Activated B cell treated with CpG ODN at 0.5 μM for 24 hours (primary cell): ENCODE measurements at regions of chr13 and their contacts with region 1.

Region 1: DNA sequence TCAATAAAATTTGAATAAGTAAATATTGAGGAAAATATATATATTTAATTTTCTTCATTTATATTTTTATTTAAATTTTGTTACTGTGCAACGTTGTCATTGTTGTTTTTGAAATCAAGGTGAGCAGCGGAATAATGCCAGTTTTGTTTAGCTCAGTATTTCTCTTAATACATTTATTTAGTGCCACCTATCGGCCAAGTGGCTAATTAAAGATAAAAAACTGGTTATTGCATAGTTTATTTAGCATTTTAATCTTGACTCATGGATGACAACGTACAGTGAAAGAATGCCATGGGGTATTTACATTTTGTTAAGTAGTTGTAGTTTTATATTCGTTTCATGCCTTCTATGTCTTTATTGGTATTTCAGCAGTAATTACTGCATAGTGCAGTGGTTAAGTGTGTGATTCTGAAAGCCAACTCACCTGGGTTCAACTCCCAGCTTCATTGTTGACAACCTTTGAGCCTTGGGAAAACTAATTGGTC is 265.9 kb downstream of the MYO16 start:
- DNase-seq: no peak
- ATAC-seq: no peak
- H3K4me3 Mint-ChIP-seq: no peak overlapping the region
- H3K27ac Mint-ChIP-seq: no peak overlapping the region
- H3K4me1 Mint-ChIP-seq: no peaks in the 10 kb centered on the region
- H3K27me3 Mint-ChIP-seq: peaks cover 7% of the 10 kb centered on the region
- CTCF ChIP-seq: peak; percentile 71

Region 2: DNA sequence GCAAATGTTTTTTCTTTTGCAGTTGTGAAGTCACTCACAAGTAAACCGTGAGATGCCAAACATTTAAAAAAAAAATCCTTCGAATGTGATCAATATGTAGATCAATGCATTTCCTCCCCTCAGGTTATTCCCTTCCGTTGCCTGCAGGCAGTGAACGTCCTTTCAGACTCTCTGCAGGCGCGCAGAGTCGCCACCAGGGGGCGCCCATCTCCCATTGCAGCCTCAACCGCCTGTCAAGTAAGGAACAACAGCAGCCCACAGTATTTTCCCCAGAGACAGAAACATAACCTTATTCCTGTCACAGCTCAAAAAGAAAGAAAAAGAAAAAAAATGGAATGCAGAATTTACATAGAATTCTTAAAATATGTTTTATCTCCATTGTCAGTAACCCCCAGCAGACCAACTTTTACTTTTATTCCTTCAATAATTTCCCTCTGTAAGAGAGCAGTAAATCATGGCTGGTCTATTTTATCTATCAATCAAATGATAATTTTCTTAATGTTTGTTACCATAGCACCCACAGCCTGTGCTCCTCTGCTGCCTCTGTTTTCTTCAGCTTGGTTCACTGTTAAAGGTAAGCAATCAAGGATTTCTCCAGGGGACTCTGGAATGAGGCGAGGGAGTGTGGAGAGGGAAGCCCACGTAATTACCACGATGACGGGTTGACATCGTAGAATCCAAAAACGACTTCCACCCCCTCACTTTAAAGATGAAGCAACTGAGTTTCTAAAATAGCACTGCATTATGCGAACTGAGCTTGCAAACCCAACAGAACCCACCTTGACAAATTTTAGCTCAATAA is 1689.8 kb before region 1 on chr13:
- CTCF ChIA-PET with region 1: no interaction called
- POLR2A ChIA-PET with region 1: no interaction called
- intact Hi-C with region 1: loop called (anchors 2 kb)
- DNase-seq: peak; percentile 31
- ATAC-seq: peak; percentile 61
- H3K4me3 Mint-ChIP-seq: no peak overlapping the region
- H3K27ac Mint-ChIP-seq: no peak overlapping the region
- H3K4me1 Mint-ChIP-seq: no peaks in the 10 kb centered on the region
- H3K27me3 Mint-ChIP-seq: no peaks in the 10 kb centered on the region
- CTCF ChIP-seq: peak; percentile 93

Region 3: GRCh38 chr13:108176685-108177274 is 718.5 kb before region 1 on chr13:
- CTCF ChIA-PET with region 1: interaction called, 7 read pairs
- POLR2A ChIA-PET with region 1: no interaction called
- intact Hi-C with region 1: loop called (anchors 1 kb)
- DNase-seq: peak; percentile 25
- ATAC-seq: peak; percentile 50
- H3K4me3 Mint-ChIP-seq: no peak overlapping the region
- H3K27ac Mint-ChIP-seq: no peak overlapping the region
- H3K4me1 Mint-ChIP-seq: no peaks in the 10 kb centered on the region
- H3K27me3 Mint-ChIP-seq: no peaks in the 10 kb centered on the region
- CTCF ChIP-seq: no peak

Region 4: DNA sequence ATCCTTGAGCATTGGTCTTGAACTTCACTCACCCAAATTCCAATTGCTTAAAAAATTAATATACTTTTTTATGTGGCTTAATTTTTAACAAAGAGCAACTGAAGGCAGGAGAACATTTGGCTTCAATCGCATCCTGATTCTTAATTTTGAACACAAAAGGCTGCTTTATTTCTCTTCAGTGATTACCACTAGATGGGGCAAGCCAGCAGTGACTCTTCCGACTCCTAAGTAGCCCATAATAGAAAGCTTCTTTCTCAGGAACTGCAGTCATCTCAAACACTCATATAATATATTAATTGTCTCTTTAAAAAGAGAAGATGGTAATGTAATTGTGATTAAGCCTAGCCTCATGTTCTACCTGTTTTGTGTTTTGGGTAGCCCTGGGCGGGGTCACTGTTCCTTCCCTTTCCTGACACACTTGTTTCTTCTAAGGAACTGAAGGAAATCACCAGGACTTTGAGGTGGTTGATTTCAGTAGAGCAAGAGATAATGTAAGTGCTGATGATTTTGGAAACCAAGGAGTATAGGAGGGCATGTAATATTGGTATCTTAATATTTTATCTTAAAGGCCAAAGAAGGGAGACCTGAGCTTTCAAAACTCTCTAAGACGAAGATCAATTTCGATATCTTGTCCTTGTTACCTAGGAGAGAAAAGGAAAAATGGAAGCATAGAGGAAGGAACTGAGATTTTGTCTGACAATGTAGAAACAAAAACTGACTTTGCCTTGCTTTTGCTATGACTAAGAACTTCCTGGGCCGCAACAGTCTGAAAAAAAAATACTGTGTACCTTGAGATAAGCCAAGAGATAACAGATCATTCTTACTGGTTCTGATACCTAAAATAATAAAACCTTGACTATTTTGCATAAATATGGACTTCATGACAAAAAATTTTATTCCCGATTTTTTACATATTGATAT is 552.6 kb before region 1 on chr13:
- CTCF ChIA-PET with region 1: interaction called, 4 read pairs
- POLR2A ChIA-PET with region 1: no interaction called
- intact Hi-C with region 1: loop called (anchors 5 kb)
- DNase-seq: no peak
- ATAC-seq: peak; percentile 34
- H3K4me3 Mint-ChIP-seq: peak overlapping the region; percentile 37
- H3K27ac Mint-ChIP-seq: peak overlapping the region; percentile 30
- H3K4me1 Mint-ChIP-seq: peaks cover 6% of the 10 kb centered on the region
- H3K27me3 Mint-ChIP-seq: peaks cover 3% of the 10 kb centered on the region
- CTCF ChIP-seq: no peak

Region 5: DNA sequence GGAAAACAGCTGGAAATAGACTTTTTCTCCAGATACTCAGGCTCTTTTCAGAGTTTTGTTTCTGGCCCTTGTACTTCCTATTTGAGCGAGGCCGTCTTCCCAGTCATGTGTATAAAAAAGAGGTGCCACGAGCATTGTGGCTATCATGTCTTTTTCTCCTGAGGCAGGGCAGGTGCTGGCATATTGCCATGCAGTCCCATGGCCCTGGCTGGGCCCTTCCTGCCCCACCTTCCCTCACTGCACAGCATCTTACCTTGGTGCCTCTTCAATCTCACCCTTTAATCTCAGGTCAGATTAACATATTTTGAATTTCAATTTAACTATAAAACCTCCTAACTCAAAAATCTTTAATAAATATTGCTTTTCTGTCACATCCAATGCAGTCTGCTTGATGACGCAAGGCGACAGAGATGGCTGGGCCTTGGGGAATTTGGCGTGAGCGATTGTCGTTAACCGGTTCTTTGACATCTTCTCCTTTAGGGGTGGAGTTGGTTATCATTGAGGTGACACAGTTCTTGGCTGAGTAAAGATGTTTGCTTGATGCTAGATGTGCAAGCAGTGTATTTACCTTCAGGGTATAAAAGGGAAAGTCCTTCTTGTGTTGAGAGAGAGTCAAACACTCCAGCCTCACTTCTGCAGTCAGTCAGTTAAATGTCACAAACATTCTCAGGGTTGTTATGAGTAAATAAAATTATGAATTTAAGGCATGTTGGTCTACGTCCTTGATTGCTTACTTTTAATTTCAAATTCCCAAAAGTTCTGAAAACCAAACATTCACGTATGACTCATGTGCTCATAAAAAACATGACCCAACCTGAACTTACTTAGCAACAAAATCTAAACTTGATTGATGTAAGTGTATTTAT is 24.0 kb after region 1 on chr13:
- CTCF ChIA-PET with region 1: no interaction called
- POLR2A ChIA-PET with region 1: no interaction called
- intact Hi-C with region 1: no loop called
- DNase-seq: no peak
- ATAC-seq: no peak
- H3K4me3 Mint-ChIP-seq: no peak overlapping the region
- H3K27ac Mint-ChIP-seq: no peak overlapping the region
- H3K4me1 Mint-ChIP-seq: peaks cover 16% of the 10 kb centered on the region
- H3K27me3 Mint-ChIP-seq: no peaks in the 10 kb centered on the region
- CTCF ChIP-seq: no peak